Adrenal gland (tissue), 19 donors: ENCODE measurements at regions of chr7 and their contacts with region 1.

Region 1: DNA sequence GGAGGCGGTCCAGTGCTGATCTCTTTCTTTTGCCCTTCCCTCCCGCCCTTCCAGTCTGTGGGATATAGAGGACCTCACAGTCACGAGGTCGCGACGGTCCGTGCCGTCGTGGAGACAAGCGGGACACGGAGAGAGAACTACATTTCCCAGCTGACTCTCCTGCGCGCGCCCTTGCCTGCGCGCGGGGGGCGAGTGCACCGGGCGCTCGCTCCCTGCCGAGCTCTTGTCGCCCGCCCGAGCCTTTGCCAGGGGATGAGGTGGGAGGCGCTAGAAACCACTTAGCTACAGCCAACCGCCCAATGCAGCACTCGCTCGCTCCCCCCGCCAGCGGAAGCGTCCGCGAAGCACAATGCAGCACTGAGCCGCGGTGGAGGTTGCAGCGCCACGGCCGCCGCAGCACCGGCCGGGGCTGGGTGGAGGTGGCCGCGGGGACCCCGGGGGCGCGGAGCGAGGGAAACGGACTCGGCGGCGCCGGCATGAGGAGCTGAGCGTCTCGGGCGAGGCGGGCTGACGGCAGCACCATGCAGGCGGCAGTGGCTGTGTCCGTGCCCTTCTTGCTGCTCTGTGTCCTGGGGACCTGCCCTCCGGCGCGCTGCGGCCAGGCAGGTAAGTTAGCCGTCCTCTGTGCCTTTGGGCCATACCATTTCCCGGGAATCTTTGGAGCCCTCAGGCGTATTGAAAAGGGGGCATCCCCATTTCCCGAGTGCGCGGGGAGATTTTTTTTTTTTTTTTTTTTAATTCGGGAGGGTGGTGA is at the start of gene ADAM22:
- DNase-seq: peak; percentile 92 to 95 (median 92)
- H3K4me3 ChIP-seq: peak within 1 kb of the TSS; percentile 4 to 92 (median 86)
- H3K27ac ChIP-seq: peak within 1 kb of the TSS in 3 of 5 donors; percentile 67 to 80 (median 73)
- H3K4me1 ChIP-seq: peaks cover 10 to 13% of the 10 kb centered on the region in 2 donors
- H3K27me3 ChIP-seq: no peaks in the 10 kb centered on the region
- CTCF ChIP-seq: no peak
- POLR2A ChIP-seq: peak; percentile 61 to 87
- total RNA-seq, gene ADAM22: 7.8 to 35.0 (median 24.8) TPM

Region 2: DNA sequence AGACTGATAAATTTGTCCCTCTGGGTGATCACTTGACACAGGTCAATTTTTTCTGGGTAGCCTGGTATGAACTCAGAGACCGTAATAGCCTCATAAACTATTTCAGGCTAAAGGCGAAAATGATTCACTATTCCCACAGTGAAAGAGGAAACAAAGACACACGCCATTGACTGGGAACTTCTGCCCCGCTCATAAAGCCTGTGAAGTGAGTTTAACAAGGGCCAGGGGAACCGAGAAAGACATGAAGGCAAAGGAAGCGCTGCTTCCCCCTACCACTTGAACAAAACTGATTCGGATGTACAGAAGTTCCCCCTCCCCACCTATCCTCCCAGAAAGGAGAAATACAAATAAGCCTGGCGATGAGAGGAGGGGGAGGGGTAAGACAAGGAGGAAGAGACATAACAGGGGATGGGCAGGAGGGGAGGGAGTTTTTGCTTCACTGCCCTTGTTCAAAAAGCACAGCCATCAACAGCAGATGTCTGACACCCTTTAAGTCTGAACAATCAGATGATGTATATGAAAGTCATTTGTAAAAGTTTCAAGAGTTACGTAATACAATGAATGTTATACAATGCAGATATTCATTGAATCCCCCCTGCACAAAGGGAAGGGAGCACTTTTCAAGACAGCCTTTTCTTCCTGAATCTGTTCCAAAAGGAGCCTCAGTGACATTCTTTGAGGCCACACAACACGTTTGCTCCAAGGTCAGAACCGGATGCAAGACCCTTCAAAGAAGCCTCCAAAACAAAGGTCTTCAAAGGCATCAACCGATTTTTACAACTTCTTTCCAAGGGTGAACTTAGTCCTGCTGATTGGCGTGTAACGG is 459.4 kb before region 1 on chr7:
- intact Hi-C with region 1: no loop called
- DNase-seq: peak in 6 of 7 donors; percentile 27 to 63 (median 40)
- H3K4me3 ChIP-seq: peak overlapping the region; percentile 2 to 61 (median 20)
- H3K27ac ChIP-seq: peak overlapping the region in 4 of 5 donors; percentile 26 to 82 (median 36)
- H3K4me1 ChIP-seq: peaks cover 3 to 15% of the 10 kb centered on the region in 2 donors
- H3K27me3 ChIP-seq: no peaks in the 10 kb centered on the region
- CTCF ChIP-seq: no peak
- POLR2A ChIP-seq: peak in 1 of 2 donors; percentile 77

Region 3: GRCh38 chr7:87886875-87887274 is 47.2 kb before region 1 on chr7:
- intact Hi-C with region 1: no loop called
- DNase-seq: no peak
- H3K4me3 ChIP-seq: no peak overlapping the region
- H3K27ac ChIP-seq: no peak overlapping the region
- H3K4me1 ChIP-seq: no peaks in the 10 kb centered on the region
- H3K27me3 ChIP-seq: no peaks in the 10 kb centered on the region
- CTCF ChIP-seq: peak; percentile 26 to 70 (median 52)
- POLR2A ChIP-seq: no peak

Region 4: GRCh38 chr7:88111136-88111743 is 177.1 kb after region 1 on chr7:
- intact Hi-C with region 1: loop called in 1 of 2 experiments (anchors 10 kb)
- DNase-seq: no peak
- H3K4me3 ChIP-seq: no peak overlapping the region
- H3K27ac ChIP-seq: no peak overlapping the region
- H3K4me1 ChIP-seq: no peaks in the 10 kb centered on the region
- H3K27me3 ChIP-seq: no peaks in the 10 kb centered on the region
- CTCF ChIP-seq: peak; percentile 57 to 81 (median 66)
- POLR2A ChIP-seq: no peak